MCF 10A (cell line): ENCODE measurements at regions of chr2 and their contacts with region 1.

Region 1: GRCh38 chr2:84459018-84459943 is at the start of gene SUCLG1:
- DNase-seq: peak; percentile 90
- H3K4me3 Mint-ChIP-seq: peak within 1 kb of the TSS; percentile 91
- H3K27ac Mint-ChIP-seq: peak within 1 kb of the TSS; percentile 97
- H3K4me1 Mint-ChIP-seq: peaks cover 16% of the 10 kb centered on the region
- H3K27me3 Mint-ChIP-seq: no peaks in the 10 kb centered on the region
- CTCF ChIP-seq: no peak
- total RNA-seq, gene SUCLG1: 87.2 and 105 TPM in 2 replicates

Region 2: GRCh38 chr2:84424152-84424551 is 35.1 kb before region 1 on chr2:
- CTCF ChIA-PET with region 1: interaction called, 3 read pairs
- POLR2A ChIA-PET with region 1: interaction called, 15 read pairs
- intact Hi-C with region 1: no loop called
- DNase-seq: peak; percentile 26
- H3K4me3 Mint-ChIP-seq: no peak overlapping the region
- H3K27ac Mint-ChIP-seq: no peak overlapping the region
- H3K4me1 Mint-ChIP-seq: peaks cover 13% of the 10 kb centered on the region
- H3K27me3 Mint-ChIP-seq: no peaks in the 10 kb centered on the region
- CTCF ChIP-seq: peak; percentile 63

Region 3: DNA sequence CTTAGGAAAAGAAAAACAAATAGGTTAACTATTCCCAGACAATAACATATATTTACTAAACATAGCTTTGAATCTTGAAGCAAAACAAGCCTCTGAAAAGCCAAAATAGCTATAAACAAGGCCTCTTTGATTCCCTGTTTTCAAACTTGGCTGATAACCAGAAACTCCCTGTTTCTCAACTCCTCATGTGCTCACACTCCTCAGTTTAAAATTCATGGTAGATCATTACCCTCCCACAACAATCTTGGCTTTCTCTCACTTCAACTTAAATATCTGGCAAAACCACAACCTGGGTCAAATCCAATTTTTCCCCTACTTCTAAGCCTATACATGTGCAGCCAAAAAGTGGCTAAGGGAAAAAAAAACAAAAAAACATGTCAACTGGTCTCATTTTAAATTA is 15.8 kb before region 1 on chr2:
- CTCF ChIA-PET with region 1: interaction called, 4 read pairs
- POLR2A ChIA-PET with region 1: interaction called, 17 read pairs
- intact Hi-C with region 1: no loop called
- DNase-seq: peak; percentile 40
- H3K4me3 Mint-ChIP-seq: no peak overlapping the region
- H3K27ac Mint-ChIP-seq: peak overlapping the region; percentile 61
- H3K4me1 Mint-ChIP-seq: peaks cover 17% of the 10 kb centered on the region
- H3K27me3 Mint-ChIP-seq: no peaks in the 10 kb centered on the region
- CTCF ChIP-seq: no peak

Region 4: DNA sequence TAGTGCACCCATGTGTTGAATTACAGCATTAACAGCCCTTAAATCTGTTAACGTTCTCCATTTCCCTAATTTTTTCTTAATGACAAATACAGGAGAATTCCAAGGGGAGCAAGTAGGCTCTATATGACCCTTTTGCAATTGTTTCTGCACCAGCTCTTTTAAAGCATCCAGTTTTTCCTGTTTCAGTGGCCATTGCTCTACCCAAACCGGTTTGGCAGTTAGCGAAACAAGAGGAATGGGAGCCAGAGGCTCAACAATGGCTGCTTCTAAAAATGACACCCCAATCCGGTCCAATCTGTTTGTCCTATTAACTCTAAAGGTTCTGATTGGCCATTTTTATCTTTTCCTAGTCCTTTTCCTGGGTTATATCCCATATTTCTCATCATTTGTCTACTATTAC is 14.9 kb after region 1 on chr2:
- CTCF ChIA-PET with region 1: interaction called, 4 read pairs
- POLR2A ChIA-PET with region 1: interaction called, 45 read pairs
- intact Hi-C with region 1: no loop called
- DNase-seq: no peak
- H3K4me3 Mint-ChIP-seq: no peak overlapping the region
- H3K27ac Mint-ChIP-seq: no peak overlapping the region
- H3K4me1 Mint-ChIP-seq: peaks cover 14% of the 10 kb centered on the region
- H3K27me3 Mint-ChIP-seq: no peaks in the 10 kb centered on the region
- CTCF ChIP-seq: no peak

Region 5: DNA sequence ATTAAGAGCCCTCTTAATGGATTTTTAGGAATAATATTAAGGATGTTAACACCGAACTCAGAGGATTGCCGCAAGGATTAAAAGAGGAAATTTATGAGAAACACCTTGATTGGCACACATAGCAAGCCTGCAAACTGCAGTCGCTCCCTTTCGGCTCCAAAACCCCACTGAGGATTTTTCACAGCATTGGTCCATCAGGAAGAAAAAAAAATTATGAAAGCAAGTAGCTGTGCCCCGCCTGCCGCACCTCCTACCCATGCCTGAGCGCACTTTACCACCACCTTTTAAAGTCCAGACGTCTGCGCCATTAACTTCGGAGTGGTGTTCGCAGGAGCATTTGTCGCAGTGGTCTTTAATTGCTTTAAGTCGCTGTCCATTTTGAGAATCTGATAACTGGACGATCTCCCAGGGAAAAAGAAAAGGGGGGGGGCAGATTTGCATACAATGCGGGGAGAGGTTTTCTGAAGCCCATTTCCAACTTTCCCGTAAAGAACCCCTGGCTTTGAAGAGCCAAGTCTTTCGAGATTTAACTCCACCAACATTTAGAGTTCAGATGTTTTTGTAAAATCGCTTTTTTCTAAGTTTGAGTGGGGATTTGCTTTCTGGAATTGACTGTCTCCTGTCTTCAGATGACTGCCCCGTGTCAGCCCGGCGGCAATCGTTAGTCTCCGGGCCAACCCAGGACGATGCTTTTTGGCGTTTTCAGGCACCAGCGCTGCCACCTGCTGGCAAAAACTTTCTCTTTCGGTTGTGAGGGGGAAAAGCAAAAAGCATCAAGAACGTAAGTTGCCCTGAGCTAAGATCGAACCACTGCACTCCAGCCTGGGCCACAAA is 422.5 kb after region 1 on chr2:
- CTCF ChIA-PET with region 1: interaction called, 3 read pairs
- POLR2A ChIA-PET with region 1: interaction called, 16 read pairs
- intact Hi-C with region 1: no loop called
- DNase-seq: peak; percentile 88
- H3K4me3 Mint-ChIP-seq: peak overlapping the region; percentile 88
- H3K27ac Mint-ChIP-seq: peak overlapping the region; percentile 52
- H3K4me1 Mint-ChIP-seq: peaks cover 17% of the 10 kb centered on the region
- H3K27me3 Mint-ChIP-seq: no peaks in the 10 kb centered on the region
- CTCF ChIP-seq: peak; percentile 47